AG04449 (cell line): ENCODE measurements at regions of chr13 and their contacts with region 1.

Region 1: GRCh38 chr13:99033814-99034213 is 56.0 kb upstream of the DOCK9 start:
- DNase-seq: no peak
- H3K4me3 ChIP-seq: no peak overlapping the region
- CTCF ChIP-seq: peak; percentile 46

Region 2: GRCh38 chr13:98848746-98849145 is 185.1 kb before region 1 on chr13:
- CTCF ChIA-PET with region 1: interaction called, 19 read pairs
- POLR2A ChIA-PET with region 1: no interaction called
- DNase-seq: no peak
- H3K4me3 ChIP-seq: no peak overlapping the region
- CTCF ChIP-seq: no peak

Region 3: DNA sequence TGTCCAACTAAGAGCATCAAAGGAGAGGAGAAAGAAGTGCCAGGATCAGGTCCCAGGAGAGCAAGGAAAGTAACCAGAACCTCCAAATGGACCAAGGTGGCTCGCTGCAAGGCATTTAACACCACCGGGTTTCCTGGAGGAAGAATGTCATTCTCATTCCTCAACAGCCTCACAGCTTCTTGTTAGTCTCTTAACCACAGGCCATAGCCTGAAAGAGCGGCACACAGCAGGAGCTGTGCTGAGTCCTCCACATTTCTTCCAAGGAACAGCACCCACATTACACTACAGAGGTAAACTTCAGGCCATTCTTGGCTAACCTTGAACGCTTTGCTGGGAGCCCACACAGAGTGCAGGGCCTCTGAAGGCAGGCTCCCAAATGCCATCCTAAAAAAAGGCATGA is 79.5 kb before region 1 on chr13:
- CTCF ChIA-PET with region 1: no interaction called
- POLR2A ChIA-PET with region 1: no interaction called
- DNase-seq: no peak
- H3K4me3 ChIP-seq: no peak overlapping the region
- CTCF ChIP-seq: no peak

Region 4: GRCh38 chr13:99022941-99023340 is 10.9 kb before region 1 on chr13:
- CTCF ChIA-PET with region 1: interaction called, 13 read pairs
- POLR2A ChIA-PET with region 1: no interaction called
- DNase-seq: no peak
- H3K4me3 ChIP-seq: no peak overlapping the region
- CTCF ChIP-seq: no peak